CD8-positive, alpha-beta T cell (primary cell): ENCODE measurements at regions of chr3 and their contacts with region 1.

Region 1: DNA sequence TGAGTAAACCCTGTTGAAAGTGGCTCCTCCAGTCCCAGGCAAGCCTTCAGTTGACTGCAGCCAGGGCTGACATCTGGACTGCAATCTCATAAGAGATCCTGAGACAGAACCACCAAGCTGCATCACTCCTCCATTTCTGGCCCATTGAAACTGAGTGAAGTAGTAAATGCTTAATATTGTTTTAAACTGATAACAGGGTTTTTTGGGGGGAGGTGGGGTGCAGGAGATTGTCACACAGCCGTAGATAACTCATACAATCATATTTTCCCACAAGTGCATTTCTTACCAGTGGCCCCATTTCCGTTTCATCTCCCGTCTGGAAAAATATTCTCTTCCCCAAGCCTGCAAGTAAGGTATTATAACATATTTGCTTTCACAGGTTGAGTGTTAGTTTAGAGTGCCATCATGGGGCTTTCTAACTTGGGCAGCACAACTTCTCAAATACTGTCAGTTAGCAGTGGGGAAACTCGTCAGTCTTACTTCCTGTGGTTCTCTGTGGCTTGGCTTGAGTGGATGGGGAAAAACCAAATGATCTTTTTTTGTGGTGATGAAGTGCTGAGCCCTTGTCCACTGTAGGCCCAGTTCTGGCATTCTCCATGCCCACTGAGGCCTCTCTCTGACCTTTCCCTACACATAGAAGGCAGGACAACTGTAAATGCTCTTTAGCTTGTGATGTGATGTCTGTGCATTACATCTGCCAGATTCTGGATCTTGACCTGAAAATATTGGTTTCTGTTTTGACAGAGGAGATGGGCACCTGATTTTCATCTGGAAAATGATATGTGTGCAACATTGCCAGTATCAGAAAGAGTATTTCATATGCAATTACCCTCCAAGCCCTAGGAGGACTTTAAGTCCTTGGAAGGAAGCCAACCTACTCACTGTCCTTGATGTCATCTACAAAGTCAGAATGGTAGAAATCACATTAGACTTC is 90.1 kb upstream of the BHLHE40 start:
- DNase-seq: peak in 4 of 9 experiments; percentile 11 to 83 (median 43)
- ATAC-seq: peak; percentile 79
- H3K4me3 ChIP-seq: no peak overlapping the region
- H3K4me3 Mint-ChIP-seq: no peak overlapping the region
- H3K27ac ChIP-seq: peak overlapping the region in 1 of 2 experiments; percentile 45
- H3K27ac Mint-ChIP-seq: peak overlapping the region; percentile 64
- H3K4me1 ChIP-seq: peaks cover 17% of the 10 kb centered on the region
- H3K4me1 Mint-ChIP-seq: peaks cover 19% of the 10 kb centered on the region
- H3K27me3 ChIP-seq: no peaks in the 10 kb centered on the region
- H3K27me3 Mint-ChIP-seq: no peaks in the 10 kb centered on the region
- CTCF ChIP-seq: no peak

Region 2: DNA sequence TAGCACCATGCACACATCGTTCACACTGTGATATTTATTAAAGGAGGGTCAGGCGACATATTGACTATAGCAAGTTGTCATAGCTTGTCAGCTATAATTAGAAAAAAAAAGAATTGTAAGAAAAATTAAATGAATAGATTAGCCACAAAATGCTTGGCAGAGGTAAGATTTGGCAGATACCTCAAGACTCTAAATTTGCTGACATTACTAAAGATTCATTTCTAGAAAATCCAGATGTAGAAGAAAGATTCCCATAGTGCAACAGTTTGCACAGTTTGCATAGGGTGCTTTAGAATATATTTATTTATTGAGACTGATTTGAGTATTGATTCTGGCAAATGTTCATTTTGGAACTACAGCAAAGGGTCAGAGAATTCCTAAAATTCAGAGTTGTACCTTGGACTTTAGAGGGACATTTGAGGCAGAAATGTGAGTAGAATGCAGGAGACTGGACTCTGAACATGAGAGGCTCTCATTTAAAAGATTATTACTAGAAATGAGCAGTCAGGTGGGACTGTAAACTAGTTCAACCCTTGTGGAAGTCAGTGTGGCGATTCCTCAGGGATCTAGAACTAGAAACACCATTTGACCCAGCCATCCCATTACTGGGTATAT is 11.9 kb before region 1 on chr3:
- CTCF ChIA-PET with region 1: interaction called, 4 read pairs
- POLR2A ChIA-PET with region 1: no interaction called
- intact Hi-C with region 1: loop called in 1 of 2 experiments (anchors 2 kb)
- DNase-seq: no peak
- ATAC-seq: no peak
- H3K4me3 ChIP-seq: no peak overlapping the region
- H3K4me3 Mint-ChIP-seq: no peak overlapping the region
- H3K27ac ChIP-seq: no peak overlapping the region
- H3K27ac Mint-ChIP-seq: no peak overlapping the region
- H3K4me1 ChIP-seq: peaks cover 4% of the 10 kb centered on the region
- H3K4me1 Mint-ChIP-seq: peaks cover 7% of the 10 kb centered on the region
- H3K27me3 ChIP-seq: no peaks in the 10 kb centered on the region
- H3K27me3 Mint-ChIP-seq: no peaks in the 10 kb centered on the region
- CTCF ChIP-seq: no peak